ENCODE measurements at regions of chr1 and their contacts with region 1.

Region 1: GRCh38 chr1:40032240-40032891 is 8.2 kb upstream of the CAP1 start:
- DNase-seq: peak; percentile 69
- H3K4me3 Mint-ChIP-seq: no peak overlapping the region
- H3K27ac Mint-ChIP-seq: no peak overlapping the region
- H3K4me1 Mint-ChIP-seq: peaks cover 35% of the 10 kb centered on the region
- H3K27me3 Mint-ChIP-seq: no peaks in the 10 kb centered on the region
- CTCF ChIP-seq: peak; percentile 59

Region 2: GRCh38 chr1:39816415-39817090 is 215.8 kb before region 1 on chr1:
- CTCF ChIA-PET with region 1: interaction called, 11 read pairs
- POLR2A ChIA-PET with region 1: no interaction called
- intact Hi-C with region 1: loop called (anchors 1 kb)
- DNase-seq: peak; percentile 72
- H3K4me3 Mint-ChIP-seq: no peak overlapping the region
- H3K27ac Mint-ChIP-seq: no peak overlapping the region
- H3K4me1 Mint-ChIP-seq: peaks cover 9% of the 10 kb centered on the region
- H3K27me3 Mint-ChIP-seq: no peaks in the 10 kb centered on the region
- CTCF ChIP-seq: peak; percentile 58

Region 3: GRCh38 chr1:39926343-39926793 is 106.0 kb before region 1 on chr1:
- CTCF ChIA-PET with region 1: interaction called, 127 read pairs
- POLR2A ChIA-PET with region 1: interaction called, 9 read pairs
- intact Hi-C with region 1: no loop called
- DNase-seq: peak; percentile 63
- H3K4me3 Mint-ChIP-seq: peak overlapping the region; percentile 20
- H3K27ac Mint-ChIP-seq: peak overlapping the region; percentile 81
- H3K4me1 Mint-ChIP-seq: peaks cover 49% of the 10 kb centered on the region
- H3K27me3 Mint-ChIP-seq: no peaks in the 10 kb centered on the region
- CTCF ChIP-seq: no peak

Region 4: DNA sequence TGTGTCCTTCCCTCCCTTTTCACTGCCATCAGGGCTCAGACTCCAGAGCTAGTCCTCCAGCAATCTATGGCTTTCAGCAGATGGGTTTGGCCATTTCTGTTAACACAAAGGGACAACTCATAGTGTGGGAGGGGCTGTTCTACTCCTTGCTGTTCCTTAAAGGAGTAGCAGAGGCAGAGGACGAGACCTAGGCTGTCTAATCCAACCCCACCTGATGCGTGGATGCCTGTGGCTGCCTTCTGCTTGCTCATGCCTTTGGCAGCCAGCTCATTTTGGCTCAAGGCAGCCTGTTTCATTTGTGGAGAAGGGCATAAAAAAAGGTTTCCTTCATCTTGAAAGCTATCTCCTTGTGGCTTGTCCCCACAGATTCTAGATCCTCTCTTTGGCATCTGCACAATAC is 50.4 kb before region 1 on chr1:
- CTCF ChIA-PET with region 1: interaction called, 10 read pairs
- POLR2A ChIA-PET with region 1: interaction called, 5 read pairs
- intact Hi-C with region 1: no loop called
- DNase-seq: peak; percentile 69
- H3K4me3 Mint-ChIP-seq: peak overlapping the region; percentile 11
- H3K27ac Mint-ChIP-seq: peak overlapping the region; percentile 78
- H3K4me1 Mint-ChIP-seq: peaks cover 26% of the 10 kb centered on the region
- H3K27me3 Mint-ChIP-seq: no peaks in the 10 kb centered on the region
- CTCF ChIP-seq: no peak

Region 5: GRCh38 chr1:40014812-40015594 is 17.4 kb before region 1 on chr1:
- CTCF ChIA-PET with region 1: interaction called, 22 read pairs
- POLR2A ChIA-PET with region 1: interaction called, 12 read pairs
- intact Hi-C with region 1: no loop called
- DNase-seq: peak; percentile 76
- H3K4me3 Mint-ChIP-seq: no peak overlapping the region
- H3K27ac Mint-ChIP-seq: peak overlapping the region; percentile 82
- H3K4me1 Mint-ChIP-seq: peaks cover 17% of the 10 kb centered on the region
- H3K27me3 Mint-ChIP-seq: no peaks in the 10 kb centered on the region
- CTCF ChIP-seq: no peak

Region 6: DNA sequence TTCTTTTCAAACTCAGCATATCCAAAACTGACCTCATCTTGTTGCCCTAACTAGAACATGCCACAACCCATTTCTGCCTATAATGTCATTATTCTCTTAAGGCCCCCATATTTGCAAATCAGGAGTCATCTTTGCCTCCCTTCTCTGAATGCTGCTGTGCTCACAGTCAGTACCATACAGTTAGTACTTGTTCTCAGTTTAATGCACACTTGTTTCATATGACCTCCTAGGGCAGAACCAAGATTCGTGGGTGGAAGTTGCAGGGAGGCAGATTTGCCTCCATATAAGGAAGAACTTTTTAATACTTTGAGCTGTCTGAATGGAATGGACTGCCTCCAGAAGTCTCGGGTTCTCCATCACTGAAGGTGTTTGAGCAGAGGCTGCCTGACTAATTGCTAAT is 17.4 kb after region 1 on chr1:
- CTCF ChIA-PET with region 1: no interaction called
- POLR2A ChIA-PET with region 1: no interaction called
- intact Hi-C with region 1: no loop called
- DNase-seq: no peak
- H3K4me3 Mint-ChIP-seq: no peak overlapping the region
- H3K27ac Mint-ChIP-seq: peak overlapping the region; percentile 49
- H3K4me1 Mint-ChIP-seq: peaks cover 14% of the 10 kb centered on the region
- H3K27me3 Mint-ChIP-seq: no peaks in the 10 kb centered on the region
- CTCF ChIP-seq: no peak

Region 7: DNA sequence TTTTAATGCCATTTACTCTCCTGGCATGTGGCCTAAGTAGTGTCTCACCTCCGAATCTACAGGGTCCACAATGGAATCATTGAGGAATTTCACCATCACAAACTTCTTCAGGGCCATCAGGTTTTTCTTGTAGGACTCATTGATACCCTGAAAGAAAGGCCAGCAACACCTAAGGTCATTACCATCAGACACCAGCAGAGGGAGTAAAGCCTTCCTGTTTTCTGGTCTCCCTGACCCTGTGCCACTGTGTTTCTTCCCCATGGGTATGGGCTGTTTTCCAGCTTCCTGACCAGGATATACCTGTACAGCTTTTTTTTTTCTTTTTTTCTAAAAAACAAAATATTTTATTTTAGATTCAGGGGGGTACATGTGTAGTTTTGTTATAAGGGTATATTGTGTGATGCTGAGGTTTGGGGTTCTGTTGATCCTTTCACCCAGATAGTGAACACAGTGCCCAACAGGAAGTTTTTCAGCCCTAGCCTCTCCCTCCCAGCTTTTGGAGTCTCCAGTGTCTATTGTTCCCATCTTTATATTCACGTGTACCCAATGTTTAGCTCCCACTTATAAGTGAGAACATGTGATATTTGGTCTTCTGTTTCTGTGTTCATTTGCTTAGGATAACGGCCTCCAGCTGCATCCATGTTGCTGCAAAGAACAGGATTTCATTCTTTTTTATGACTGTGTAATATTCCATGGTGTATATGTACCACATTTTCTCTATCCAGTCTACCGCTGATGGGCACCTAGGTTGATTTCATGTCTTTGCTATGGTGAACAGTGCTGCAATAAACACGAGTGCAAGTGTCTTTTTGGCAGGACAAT is 46.4 kb after region 1 on chr1:
- CTCF ChIA-PET with region 1: no interaction called
- POLR2A ChIA-PET with region 1: no interaction called
- intact Hi-C with region 1: no loop called
- DNase-seq: peak; percentile 79
- H3K4me3 Mint-ChIP-seq: no peak overlapping the region
- H3K27ac Mint-ChIP-seq: no peak overlapping the region
- H3K4me1 Mint-ChIP-seq: peaks cover 13% of the 10 kb centered on the region
- H3K27me3 Mint-ChIP-seq: no peaks in the 10 kb centered on the region
- CTCF ChIP-seq: peak; percentile 65

Region 8: DNA sequence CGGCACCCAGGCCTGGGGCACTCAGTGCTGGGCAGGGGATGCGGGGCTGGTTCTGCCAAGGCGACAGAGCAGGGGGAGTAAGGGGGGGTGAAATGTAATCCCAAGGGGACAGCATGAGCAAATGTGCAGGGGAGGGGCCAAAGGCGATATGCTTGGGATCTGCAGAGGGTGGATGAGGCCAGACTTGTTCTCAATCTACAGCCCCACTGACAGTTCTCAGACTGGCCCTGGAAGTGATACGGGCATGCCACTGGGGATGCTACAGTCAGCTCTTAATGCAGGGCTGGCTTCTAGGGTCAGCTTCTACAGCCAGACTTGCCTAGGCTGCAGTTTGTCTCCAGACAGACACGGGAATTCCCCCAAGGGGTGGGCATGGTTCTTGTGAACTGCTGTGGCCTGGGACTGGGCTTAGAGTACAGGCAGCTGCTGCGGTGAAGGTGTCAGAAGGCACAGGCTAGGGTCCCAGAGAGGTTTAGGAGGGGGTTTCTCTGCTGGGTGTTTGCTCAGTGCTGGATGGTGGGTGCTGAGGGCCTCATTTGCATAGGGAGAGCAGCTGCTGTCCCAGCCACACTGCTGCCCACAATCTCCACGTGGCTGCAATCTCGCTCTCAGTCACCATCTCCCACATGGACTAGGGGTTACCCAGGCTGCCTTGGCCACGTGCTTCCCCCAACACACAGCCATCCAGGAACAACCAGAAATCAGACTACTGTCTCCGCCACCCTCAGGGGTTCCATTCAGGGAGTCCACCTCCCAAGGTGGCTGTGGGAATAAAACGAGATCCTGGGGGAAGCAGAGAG is 1696.2 kb after region 1 on chr1:
- CTCF ChIA-PET with region 1: no interaction called
- POLR2A ChIA-PET with region 1: no interaction called
- intact Hi-C with region 1: no loop called
- DNase-seq: no peak
- H3K4me3 Mint-ChIP-seq: no peak overlapping the region
- H3K27ac Mint-ChIP-seq: no peak overlapping the region
- H3K4me1 Mint-ChIP-seq: no peaks in the 10 kb centered on the region
- H3K27me3 Mint-ChIP-seq: peaks cover 2% of the 10 kb centered on the region
- CTCF ChIP-seq: no peak